ENCODE measurements at regions of chr16 and their contacts with region 1.

Region 1: DNA sequence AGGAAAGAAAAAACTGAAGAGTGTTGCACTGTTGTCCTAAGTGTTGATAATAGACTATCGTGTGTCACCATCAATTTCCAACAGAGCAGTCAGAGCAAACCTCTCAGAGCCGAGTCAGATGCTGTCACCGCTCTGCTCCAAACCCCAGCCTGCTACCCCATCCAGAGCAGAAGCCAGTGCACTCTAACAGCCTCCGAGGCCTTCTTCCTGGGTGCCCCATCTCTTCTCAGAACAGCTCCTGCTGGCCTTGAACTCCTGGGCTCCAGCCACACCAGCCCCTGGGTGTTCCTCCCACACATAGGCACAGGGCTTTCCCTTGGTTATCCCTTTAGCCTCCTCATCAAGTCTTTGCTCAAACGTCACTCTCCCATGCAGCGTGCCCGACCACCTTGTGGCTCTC is 21.0 kb downstream of the MEIOB start:
- DNase-seq: no peak
- ATAC-seq: no peak

Region 2: DNA sequence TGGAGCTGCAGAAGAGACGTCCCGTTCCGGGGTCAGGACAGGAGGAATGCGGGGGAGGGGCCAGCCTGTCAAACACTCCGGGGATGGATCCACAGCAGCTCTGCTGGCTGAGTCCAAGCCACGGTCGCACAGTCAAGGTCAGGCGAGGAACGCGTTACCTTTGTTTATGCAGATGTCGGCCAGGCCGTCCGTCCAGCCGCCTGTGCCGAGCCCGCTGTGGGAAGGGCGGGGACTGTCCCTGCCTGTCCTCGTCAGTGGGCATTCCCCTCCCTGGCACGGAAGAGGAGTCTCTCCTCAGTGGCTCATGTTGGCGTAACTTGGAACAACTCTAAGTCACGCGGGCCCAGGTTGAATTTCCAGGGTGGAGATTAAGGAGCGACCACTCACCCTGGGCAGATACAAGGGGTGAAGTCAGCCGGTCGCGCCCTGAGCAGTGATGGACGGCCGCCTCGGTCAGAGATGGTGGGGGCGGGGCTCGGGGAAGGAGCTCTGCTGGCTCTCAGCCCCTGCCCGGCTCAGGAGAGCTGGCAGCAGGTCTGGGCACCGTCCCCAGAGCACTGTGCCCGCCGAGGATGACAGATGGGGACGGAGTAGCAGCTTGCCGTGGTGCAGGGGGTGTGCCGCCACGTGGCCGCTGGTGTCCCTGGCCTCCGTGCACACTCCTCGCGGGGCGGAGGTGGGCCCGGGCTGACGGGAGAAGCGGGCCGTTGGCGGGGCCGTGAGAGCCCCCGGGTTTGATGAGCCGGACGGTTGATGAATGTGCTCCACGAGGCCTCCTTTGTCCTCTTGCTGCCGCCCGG is 690.8 kb before region 1 on chr16:
- intact Hi-C with region 1: loop called (anchors 5 kb)
- DNase-seq: no peak
- ATAC-seq: no peak

Region 3: DNA sequence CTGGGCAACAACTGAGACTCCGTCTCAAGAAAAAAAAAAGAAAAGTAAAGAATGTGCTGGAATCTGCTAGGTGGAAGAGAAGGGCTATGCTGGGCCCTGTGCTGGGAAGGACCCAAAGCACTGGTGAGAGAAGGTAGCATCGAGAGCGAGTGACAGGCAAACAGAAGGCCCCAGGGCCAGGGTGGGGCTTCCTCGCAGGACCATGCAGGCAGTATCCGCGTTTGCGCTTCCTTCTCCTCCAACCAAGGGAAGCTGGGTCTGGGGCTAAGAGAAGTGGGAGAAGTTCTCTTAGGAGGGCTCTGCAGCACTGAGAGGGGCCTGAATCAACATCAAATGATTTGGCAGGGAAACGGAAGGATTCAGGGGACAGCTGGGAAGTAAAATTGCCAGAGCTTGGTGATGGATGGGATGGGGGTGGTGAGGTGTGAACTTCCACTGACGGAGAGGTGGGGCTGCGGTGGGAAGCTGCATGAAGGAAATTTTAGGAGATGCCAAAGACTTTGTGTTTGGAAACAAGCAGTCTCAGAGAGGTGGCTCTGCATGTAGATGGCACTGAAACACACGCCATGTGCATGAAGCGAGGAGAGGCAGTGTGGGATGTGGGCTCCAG is 405.7 kb after region 1 on chr16:
- intact Hi-C with region 1: no loop called
- DNase-seq: no peak
- ATAC-seq: no peak

Measured in sciatic nerve (tissue), 2 donors.